Vagina (tissue), 2 donors: ENCODE measurements at regions of chr5 and their contacts with region 1.

Region 1: GRCh38 chr5:82364497-82364896 is 86.3 kb upstream of the RPS23 start:
- DNase-seq: no peak
- H3K4me3 ChIP-seq: no peak overlapping the region
- H3K27ac ChIP-seq: no peak overlapping the region
- H3K4me1 ChIP-seq: no peaks in the 10 kb centered on the region
- H3K27me3 ChIP-seq: no peaks in the 10 kb centered on the region
- CTCF ChIP-seq: peak in 1 of 3 experiments; percentile 41
- POLR2A ChIP-seq: no peak

Region 2: GRCh38 chr5:82406205-82406773 is 41.8 kb after region 1 on chr5:
- intact Hi-C with region 1: no loop called
- DNase-seq: no peak
- H3K4me3 ChIP-seq: no peak overlapping the region
- H3K27ac ChIP-seq: no peak overlapping the region
- H3K4me1 ChIP-seq: no peaks in the 10 kb centered on the region
- H3K27me3 ChIP-seq: no peaks in the 10 kb centered on the region
- CTCF ChIP-seq: no peak
- POLR2A ChIP-seq: no peak

Region 3: DNA sequence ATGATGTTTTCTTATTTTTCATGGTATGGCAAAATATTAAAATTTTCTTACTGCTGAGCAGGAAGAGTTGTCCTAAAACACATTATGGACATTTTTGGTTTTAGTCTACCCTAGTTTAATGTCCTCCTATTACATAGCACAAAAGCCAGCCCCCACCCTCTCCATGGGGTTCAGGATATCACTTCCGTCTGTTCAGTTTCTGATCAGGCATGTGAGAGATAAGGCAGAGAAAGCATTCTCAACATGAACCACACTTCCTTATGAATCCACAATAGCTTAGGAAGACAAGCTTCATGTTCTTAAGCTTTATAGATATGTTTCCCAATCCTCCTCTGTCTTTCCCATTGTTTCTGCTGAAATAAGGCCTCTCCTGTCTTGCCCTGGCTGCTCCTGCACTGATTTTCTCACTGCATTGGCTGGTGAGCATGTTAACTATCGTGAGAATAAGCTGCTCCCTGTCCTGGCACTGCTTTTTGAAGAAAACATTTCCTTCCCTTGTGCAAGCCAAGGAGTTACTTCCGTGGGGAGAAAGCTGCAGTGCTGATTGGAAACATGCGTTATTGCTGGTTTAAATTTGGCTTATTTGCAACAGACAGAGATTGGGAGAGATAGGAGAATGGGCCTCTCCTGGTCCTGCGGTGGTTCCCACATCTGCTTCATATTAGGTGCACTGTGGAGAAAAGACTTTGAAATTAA is 174.0 kb after region 1 on chr5:
- intact Hi-C with region 1: no loop called
- DNase-seq: no peak
- H3K4me3 ChIP-seq: no peak overlapping the region
- H3K27ac ChIP-seq: no peak overlapping the region
- H3K4me1 ChIP-seq: peaks cover 10% of the 10 kb centered on the region
- H3K27me3 ChIP-seq: no peaks in the 10 kb centered on the region
- CTCF ChIP-seq: no peak
- POLR2A ChIP-seq: no peak

Region 4: DNA sequence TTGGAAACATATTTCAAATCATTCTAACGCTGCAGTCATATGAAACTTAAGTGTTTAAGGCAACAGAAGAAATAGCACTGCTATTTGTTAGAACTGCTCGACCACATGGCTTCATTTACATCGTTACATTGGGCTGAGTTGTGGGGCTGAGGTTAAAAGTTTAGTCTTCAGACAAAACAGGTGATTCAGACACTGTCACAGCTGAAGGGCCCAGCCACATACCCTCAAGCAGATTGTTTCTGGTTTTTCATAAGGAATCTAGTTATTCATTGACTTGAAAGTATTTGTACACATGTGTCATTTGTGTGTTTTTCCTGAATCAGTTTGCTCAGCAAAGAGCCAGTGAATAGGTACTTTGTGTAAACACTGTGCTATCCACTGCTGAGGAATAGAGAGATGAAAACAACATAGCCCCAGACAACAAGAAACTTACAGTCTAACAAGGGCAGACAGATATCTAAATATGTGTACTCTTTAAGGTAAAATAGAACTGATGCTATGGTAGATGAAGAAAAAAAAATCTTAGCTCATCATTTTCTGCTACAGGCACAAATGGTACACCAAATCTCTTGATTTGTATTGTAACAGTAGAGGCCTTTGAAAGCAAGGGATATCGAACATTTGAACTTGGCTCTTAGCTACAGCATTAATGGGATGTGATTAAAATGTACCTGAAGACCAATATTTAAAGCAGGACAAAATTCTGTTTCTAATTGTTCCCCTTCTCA is 271.2 kb after region 1 on chr5:
- intact Hi-C with region 1: loop called (anchors 10 kb)
- DNase-seq: no peak
- H3K4me3 ChIP-seq: no peak overlapping the region
- H3K27ac ChIP-seq: no peak overlapping the region
- H3K4me1 ChIP-seq: peaks cover 14% of the 10 kb centered on the region
- H3K27me3 ChIP-seq: no peaks in the 10 kb centered on the region
- CTCF ChIP-seq: no peak
- POLR2A ChIP-seq: no peak